Right cardiac atrium (tissue), 5 donors: ENCODE measurements at regions of chr22 and their contacts with region 1.

Region 1: DNA sequence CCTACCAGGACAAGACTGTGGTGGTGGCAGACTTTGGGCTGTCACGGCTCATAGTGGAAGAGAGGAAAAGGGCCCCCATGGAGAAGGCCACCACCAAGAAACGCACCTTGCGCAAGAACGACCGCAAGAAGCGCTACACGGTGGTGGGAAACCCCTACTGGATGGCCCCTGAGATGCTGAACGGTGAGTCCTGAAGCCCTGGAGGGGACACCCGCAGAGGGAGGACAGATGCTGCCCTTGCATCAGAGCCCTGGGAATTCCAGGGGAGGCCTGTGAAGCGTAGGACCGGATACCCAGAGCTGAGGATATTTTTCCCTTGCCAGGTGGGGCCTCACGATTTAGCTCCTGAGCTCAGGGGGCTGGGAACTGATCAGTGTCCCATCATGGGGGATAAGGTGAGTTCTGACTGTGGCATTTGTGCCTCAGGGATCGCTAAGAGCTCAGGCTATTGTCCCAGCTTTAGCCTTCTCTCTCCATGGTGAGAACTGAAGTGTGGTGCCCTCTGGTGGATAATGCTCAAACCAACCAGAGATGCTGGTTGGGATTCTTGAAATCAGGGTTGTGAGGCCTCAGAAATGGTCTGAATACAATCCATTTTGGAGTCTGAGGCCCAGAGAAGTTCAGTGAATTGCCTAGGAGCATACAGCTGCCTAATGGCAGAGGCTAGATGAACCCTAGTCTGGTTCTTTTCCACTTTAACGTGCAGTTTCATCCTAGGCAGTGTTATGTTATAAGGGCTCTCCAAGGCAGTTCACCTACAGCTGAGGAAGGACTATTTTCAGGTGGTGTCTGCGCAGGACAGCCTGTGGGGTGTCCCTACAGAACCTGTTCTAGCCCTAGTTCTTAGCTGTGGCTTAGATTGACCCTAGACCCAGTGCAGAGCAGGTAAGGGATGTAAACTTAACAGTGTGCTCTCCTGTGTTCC is 19.5 kb downstream of the PIK3IP1 start:
- DNase-seq: no peak
- ATAC-seq: peak; percentile 69 to 70
- H3K4me3 ChIP-seq: no peak overlapping the region
- H3K27ac ChIP-seq: no peak overlapping the region
- H3K4me1 ChIP-seq: no peaks in the 10 kb centered on the region
- H3K27me3 ChIP-seq: no peaks in the 10 kb centered on the region

Region 2: DNA sequence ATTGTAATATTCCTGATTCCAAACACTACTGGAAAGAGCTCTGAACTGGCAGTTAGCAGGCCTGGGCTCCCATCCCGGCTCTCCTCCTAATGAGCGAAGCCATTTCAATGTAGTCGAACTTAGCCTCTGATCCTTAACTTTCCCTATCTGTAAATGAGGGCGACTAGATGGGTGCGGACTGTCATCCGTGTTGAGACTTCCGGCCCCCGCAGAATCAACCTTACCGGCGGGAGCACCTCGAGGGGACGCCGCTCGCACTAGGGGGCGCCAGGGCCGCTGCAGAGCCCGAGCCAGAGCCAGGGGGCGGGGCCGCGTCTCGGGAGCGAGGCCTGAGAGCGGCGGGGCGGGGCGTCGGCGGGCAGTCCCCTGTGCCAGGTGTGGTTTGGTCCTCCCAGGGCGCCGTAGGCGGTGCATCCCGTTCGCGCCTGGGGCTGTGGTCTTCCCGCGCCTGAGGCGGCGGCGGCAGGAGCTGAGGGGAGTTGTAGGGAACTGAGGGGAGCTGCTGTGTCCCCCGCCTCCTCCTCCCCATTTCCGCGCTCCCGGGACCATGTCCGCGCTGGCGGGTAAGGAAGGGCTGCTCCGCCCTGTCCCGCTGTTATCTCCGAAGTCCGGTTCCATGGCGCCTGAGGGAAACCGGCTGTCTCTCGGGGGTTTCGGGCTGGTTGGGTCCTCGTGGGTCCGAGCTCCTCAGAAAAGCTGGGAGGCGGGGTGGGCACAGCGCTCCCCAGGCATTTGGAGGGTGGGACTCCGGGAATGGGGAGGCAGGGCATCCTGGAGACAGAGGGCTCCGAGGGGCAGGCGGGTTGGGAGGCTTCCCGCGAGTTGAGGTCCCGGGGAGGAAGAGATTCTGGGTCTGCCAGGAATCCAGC is 60.7 kb before region 1 on chr22 and contains the start of gene LIMK2:
- intact Hi-C with region 1: loop called in 2 of 4 experiments (anchors 5 kb)
- DNase-seq: peak; percentile 96 to 99 (median 98)
- ATAC-seq: peak; percentile 93 to 94
- H3K4me3 ChIP-seq: peak within 1 kb of the TSS; percentile 62
- H3K27ac ChIP-seq: peak within 1 kb of the TSS; percentile 73
- H3K4me1 ChIP-seq: peaks cover 8% of the 10 kb centered on the region
- H3K27me3 ChIP-seq: no peaks in the 10 kb centered on the region
- total RNA-seq, gene LIMK2: 8.9 to 12.1 (median 11.1) TPM

Region 3: GRCh38 chr22:31218565-31219262 is 54.1 kb before region 1 on chr22:
- intact Hi-C with region 1: loop called in 2 of 4 experiments (anchors 5 kb)
- DNase-seq: no peak
- ATAC-seq: no peak
- H3K4me3 ChIP-seq: no peak overlapping the region
- H3K27ac ChIP-seq: no peak overlapping the region
- H3K4me1 ChIP-seq: peaks cover 6% of the 10 kb centered on the region
- H3K27me3 ChIP-seq: no peaks in the 10 kb centered on the region

Region 4: DNA sequence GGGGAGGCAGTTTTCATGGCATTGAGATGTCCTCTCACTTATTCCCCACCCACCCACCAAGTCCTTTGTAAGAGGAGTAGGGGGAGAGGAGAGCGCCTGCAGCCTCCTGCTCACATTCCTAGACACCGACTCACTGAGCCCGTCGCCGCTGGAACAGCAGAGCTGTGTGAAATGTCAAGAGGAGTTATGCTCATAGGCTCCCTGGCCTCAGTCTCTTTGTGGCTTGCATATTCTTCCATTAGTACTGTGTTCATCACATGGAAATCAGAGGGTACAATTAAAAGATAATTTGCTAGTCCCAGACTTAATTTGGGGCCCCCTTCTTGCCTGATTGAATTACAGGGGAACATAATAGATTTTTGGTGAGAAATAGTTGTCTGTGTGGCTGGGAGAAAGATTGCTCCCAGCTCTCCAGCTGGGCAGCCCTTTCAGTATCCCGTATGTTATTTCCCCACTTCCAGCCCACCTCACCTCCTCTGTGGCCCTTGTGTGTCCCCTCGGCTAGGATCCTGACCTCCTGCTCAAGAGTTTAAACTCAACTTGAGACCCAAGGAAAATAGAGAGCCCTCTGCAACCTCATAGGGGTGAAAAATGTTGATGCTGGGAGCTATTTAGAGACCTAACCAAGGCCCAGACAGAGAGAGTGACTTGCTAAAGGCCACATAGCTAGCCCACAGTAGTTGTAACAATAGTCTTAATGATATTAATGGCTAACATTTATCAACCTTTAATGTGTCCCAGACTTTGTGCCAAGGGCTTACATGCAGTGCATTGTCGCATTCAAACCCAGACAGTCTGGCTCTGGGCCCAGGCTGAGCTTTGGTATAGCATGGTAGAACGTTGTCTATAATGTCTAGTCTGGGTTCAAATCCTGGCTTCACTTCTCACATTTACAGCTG is 28.5 kb before region 1 on chr22:
- intact Hi-C with region 1: no loop called
- DNase-seq: no peak
- ATAC-seq: no peak
- H3K4me3 ChIP-seq: no peak overlapping the region
- H3K27ac ChIP-seq: no peak overlapping the region
- H3K4me1 ChIP-seq: peaks cover 14% of the 10 kb centered on the region
- H3K27me3 ChIP-seq: no peaks in the 10 kb centered on the region